Activated CD4-positive, alpha-beta T cell treated with anti-CD3 and anti-CD28 coated beads for 36 hours (primary cell): ENCODE measurements at regions of chr11 and their contacts with region 1.

Region 1: GRCh38 chr11:118046051-118046963 is 30.6 kb upstream of the TMPRSS4 start:
- DNase-seq: peak; percentile 49
- ATAC-seq: peak; percentile 76
- H3K4me3 Mint-ChIP-seq: peak overlapping the region; percentile 25
- H3K27ac Mint-ChIP-seq: peak overlapping the region; percentile 76
- H3K4me1 Mint-ChIP-seq: peaks cover 88% of the 10 kb centered on the region
- H3K27me3 Mint-ChIP-seq: no peaks in the 10 kb centered on the region

Region 2: GRCh38 chr11:117919781-117920221 is 126.5 kb before region 1 on chr11:
- CTCF ChIA-PET with region 1: no interaction called
- POLR2A ChIA-PET with region 1: no interaction called
- intact Hi-C with region 1: no loop called
- DNase-seq: peak; percentile 49
- ATAC-seq: peak; percentile 100
- H3K4me3 Mint-ChIP-seq: no peak overlapping the region
- H3K27ac Mint-ChIP-seq: peak overlapping the region; percentile 33
- H3K4me1 Mint-ChIP-seq: peaks cover 11% of the 10 kb centered on the region
- H3K27me3 Mint-ChIP-seq: no peaks in the 10 kb centered on the region

Region 3: GRCh38 chr11:117932067-117932370 is 114.3 kb before region 1 on chr11:
- CTCF ChIA-PET with region 1: interaction called, 9 read pairs
- POLR2A ChIA-PET with region 1: no interaction called
- intact Hi-C with region 1: loop called (anchors 1 to 5 kb)
- DNase-seq: peak; percentile 85
- ATAC-seq: peak; percentile 70
- H3K4me3 Mint-ChIP-seq: no peak overlapping the region
- H3K27ac Mint-ChIP-seq: peak overlapping the region; percentile 93
- H3K4me1 Mint-ChIP-seq: peaks cover 62% of the 10 kb centered on the region
- H3K27me3 Mint-ChIP-seq: no peaks in the 10 kb centered on the region

Region 4: DNA sequence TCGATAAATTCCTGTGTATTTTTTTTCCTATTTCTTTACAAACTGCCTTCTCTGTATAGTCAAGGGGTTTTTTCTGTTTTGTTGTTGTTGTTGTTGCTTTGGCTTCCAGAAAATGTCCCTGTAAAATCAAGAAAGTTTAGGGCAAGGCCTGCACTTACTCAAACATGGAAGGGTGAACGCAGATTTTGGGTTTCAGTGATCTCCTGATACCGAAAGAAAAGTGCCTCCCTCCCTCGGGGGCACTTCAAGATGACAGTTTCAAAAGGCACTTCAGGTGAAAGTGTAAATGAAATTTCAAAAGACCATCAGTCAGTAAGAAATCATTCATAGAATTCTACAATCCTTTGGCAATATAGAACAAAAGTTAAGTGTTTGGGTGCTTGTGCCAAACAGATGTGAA is 12.9 kb before region 1 on chr11:
- CTCF ChIA-PET with region 1: interaction called, 11 read pairs
- POLR2A ChIA-PET with region 1: no interaction called
- intact Hi-C with region 1: no loop called
- DNase-seq: no peak
- ATAC-seq: peak; percentile 71
- H3K4me3 Mint-ChIP-seq: no peak overlapping the region
- H3K27ac Mint-ChIP-seq: peak overlapping the region; percentile 60
- H3K4me1 Mint-ChIP-seq: peaks cover 18% of the 10 kb centered on the region
- H3K27me3 Mint-ChIP-seq: no peaks in the 10 kb centered on the region

Region 5: DNA sequence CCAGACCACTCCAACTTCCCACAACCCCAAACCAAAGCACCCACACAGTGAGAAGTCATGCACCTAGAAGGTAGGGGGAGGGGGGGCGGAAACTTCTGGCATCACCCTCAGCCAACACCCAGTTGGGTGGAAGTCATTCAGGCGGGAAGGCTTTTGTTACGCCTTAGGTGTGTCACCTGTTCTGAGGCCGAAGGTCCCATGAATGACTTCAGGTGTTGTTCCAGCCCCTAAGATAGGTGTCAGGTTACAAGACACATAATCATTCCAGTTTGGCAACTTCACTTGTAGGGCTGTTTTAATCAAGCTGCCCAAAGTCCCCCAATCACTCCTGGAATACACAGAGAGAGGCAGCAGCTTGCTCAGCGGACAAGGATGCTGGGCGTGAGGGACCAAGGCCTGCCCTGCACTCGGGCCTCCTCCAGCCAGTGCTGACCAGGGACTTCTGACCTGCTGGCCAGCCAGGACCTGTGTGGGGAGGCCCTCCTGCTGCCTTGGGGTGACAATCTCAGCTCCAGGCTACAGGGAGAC is 30.5 kb after region 1 on chr11 and contains the start of gene TMPRSS4:
- CTCF ChIA-PET with region 1: no interaction called
- POLR2A ChIA-PET with region 1: no interaction called
- intact Hi-C with region 1: no loop called
- DNase-seq: no peak
- ATAC-seq: no peak
- H3K4me3 Mint-ChIP-seq: no peak within 1 kb of the TSS
- H3K27ac Mint-ChIP-seq: no peak within 1 kb of the TSS
- H3K4me1 Mint-ChIP-seq: no peaks in the 10 kb centered on the region
- H3K27me3 Mint-ChIP-seq: no peaks in the 10 kb centered on the region
- total RNA-seq, gene TMPRSS4: not detected